ENCODE measurements at regions of chr9 and their contacts with region 1.

Region 1: GRCh38 chr9:121640076-121640475 is 11.4 kb upstream of the DAB2IP start:
- DNase-seq: peak; percentile 72

Region 2: GRCh38 chr9:121529237-121529987 is 110.7 kb before region 1 on chr9:
- CTCF ChIA-PET with region 1: no interaction called
- POLR2A ChIA-PET with region 1: no interaction called
- DNase-seq: no peak

Region 3: DNA sequence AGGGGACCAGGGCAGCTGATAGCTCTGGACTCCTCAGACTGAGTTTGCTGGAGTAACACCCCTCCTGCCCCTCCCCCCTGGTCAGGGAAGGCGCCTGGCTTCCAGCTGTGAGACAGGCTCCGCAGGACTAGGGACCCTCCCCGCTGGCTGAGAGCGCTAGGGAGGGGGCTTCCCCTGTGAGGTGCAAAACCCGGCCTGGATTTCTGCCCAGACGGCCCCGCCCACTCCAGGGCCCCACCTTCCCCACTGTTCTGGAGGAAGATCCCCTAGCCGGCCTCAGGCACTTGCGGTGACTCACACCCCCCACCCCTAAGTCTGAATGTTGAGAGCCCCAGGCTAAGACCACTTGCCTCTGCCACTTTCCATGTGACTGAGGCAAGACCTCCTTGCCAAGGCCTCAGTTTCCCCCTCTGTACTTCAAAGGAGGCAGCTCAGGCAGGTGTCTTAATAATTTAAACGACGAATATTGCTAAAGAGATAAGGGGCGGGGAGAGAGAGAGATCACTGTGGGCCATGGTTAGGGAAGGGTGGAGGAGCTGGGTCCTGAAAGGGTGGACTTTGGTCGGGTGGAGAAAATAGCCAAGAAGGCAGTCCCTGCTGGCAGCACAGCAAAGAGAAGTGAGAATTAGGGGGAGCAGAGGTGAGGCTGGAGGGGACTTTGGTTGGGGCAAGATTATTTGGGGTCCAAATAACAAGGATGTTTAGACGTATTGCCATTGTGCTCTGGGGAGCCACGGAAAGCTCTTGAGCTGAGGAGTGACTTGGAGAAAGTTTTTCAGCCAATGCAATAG is 10.3 kb after region 1 on chr9:
- CTCF ChIA-PET with region 1: interaction called, 12 read pairs
- POLR2A ChIA-PET with region 1: interaction called, 3 read pairs
- DNase-seq: peak; percentile 71

Region 4: GRCh38 chr9:121686930-121687541 is 47.0 kb after region 1 on chr9:
- CTCF ChIA-PET with region 1: interaction called, 25 read pairs
- POLR2A ChIA-PET with region 1: no interaction called
- DNase-seq: peak; percentile 77